ENCODE measurements at regions of chr18 and their contacts with region 1.

Region 1: DNA sequence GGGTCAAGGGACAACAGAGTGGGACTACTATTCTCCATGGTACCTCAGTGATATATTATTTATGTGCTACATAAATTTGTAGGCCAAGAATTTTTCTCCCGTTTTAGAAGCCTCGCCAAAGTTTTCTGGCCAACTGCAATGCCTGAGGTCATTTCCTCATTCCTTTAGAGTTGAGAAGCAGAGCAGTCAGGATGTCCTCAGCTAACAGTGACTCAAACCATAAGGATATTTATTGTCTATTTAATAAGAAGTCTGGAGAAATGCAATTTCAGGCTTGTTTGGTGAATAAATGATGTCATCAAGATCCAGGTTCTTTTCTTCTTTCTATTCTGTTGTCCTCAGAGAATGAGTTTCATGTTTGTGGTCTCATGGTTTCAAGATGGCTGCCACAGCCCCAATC is 91.0 kb downstream of the ADCYAP1 start:
- DNase-seq: no peak
- ATAC-seq: no peak
- H3K4me3 ChIP-seq: no peak overlapping the region
- H3K4me3 Mint-ChIP-seq: no peak overlapping the region
- H3K27ac ChIP-seq: no peak overlapping the region
- H3K27ac Mint-ChIP-seq: no peak overlapping the region
- H3K4me1 ChIP-seq: no peaks in the 10 kb centered on the region
- H3K4me1 Mint-ChIP-seq: no peaks in the 10 kb centered on the region
- H3K27me3 ChIP-seq: no peaks in the 10 kb centered on the region
- H3K27me3 Mint-ChIP-seq: peaks cover 0 to 23% (median 11%) of the 10 kb centered on the region in 5 donors

Region 2: GRCh38 chr18:1026930-1027329 is 31.3 kb after region 1 on chr18:
- CTCF ChIA-PET with region 1: no interaction called
- POLR2A ChIA-PET with region 1: no interaction called
- intact Hi-C with region 1: no loop called
- DNase-seq: no peak
- ATAC-seq: no peak
- H3K4me3 ChIP-seq: no peak overlapping the region
- H3K4me3 Mint-ChIP-seq: no peak overlapping the region
- H3K27ac ChIP-seq: no peak overlapping the region
- H3K27ac Mint-ChIP-seq: no peak overlapping the region
- H3K4me1 ChIP-seq: no peaks in the 10 kb centered on the region
- H3K4me1 Mint-ChIP-seq: no peaks in the 10 kb centered on the region
- H3K27me3 ChIP-seq: no peaks in the 10 kb centered on the region
- H3K27me3 Mint-ChIP-seq: peaks cover 0 to 7% (median 5%) of the 10 kb centered on the region in 5 donors

Region 3: GRCh38 chr18:1062588-1062987 is 67.0 kb after region 1 on chr18:
- CTCF ChIA-PET with region 1: no interaction called
- POLR2A ChIA-PET with region 1: no interaction called
- intact Hi-C with region 1: loop called in 1 of 2 experiments (anchors 10 kb)
- DNase-seq: no peak
- ATAC-seq: no peak
- H3K4me3 ChIP-seq: no peak overlapping the region
- H3K4me3 Mint-ChIP-seq: no peak overlapping the region
- H3K27ac ChIP-seq: no peak overlapping the region
- H3K27ac Mint-ChIP-seq: no peak overlapping the region
- H3K4me1 ChIP-seq: no peaks in the 10 kb centered on the region
- H3K4me1 Mint-ChIP-seq: no peaks in the 10 kb centered on the region
- H3K27me3 ChIP-seq: no peaks in the 10 kb centered on the region
- H3K27me3 Mint-ChIP-seq: peaks cover 0 to 9% (median 0%) of the 10 kb centered on the region in 5 donors